Prostate gland (tissue), 2 donors: ENCODE measurements at regions of chr10 and their contacts with region 1.

Region 1: GRCh38 chr10:88245974-88246511 is 337.1 kb downstream of the RNLS start:
- DNase-seq: no peak
- H3K4me3 ChIP-seq: no peak overlapping the region
- H3K27ac ChIP-seq: no peak overlapping the region
- H3K4me1 ChIP-seq: no peaks in the 10 kb centered on the region
- H3K27me3 ChIP-seq: no peaks in the 10 kb centered on the region
- CTCF ChIP-seq: no peak
- POLR2A ChIP-seq: no peak

Region 2: DNA sequence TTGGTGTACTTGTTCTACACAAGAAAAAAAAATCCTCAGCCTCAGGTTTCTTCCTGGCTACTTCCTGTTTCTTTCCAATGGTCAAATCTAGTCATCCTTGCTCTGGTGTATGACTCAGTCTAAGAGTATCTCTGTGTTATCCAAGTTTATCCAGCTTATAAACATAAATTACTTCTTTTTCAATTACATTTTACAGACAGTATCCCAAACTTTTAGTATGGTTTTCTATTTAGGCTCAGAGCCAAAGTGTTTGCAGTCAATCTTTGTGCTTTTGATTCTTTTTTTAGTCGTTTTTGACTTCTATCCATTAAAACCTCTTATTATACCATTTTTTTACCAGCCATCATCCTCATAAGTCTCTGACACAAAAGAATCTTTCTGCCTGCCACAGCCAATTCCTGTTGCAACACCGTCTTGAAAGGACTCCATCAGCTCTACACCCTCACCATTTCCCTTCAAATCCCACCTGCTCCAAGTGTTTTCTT is 88.0 kb before region 1 on chr10:
- intact Hi-C with region 1: loop called (anchors 5 kb)
- DNase-seq: no peak
- H3K4me3 ChIP-seq: no peak overlapping the region
- H3K27ac ChIP-seq: peak overlapping the region in 1 of 2 donors; percentile 66
- H3K4me1 ChIP-seq: no peaks in the 10 kb centered on the region
- H3K27me3 ChIP-seq: no peaks in the 10 kb centered on the region
- CTCF ChIP-seq: no peak
- POLR2A ChIP-seq: no peak

Region 3: GRCh38 chr10:88332503-88333247 is 86.6 kb after region 1 on chr10:
- intact Hi-C with region 1: no loop called
- DNase-seq: no peak
- H3K4me3 ChIP-seq: no peak overlapping the region
- H3K27ac ChIP-seq: no peak overlapping the region
- H3K4me1 ChIP-seq: no peaks in the 10 kb centered on the region
- H3K27me3 ChIP-seq: no peaks in the 10 kb centered on the region
- CTCF ChIP-seq: no peak
- POLR2A ChIP-seq: no peak

Region 4: GRCh38 chr10:88372051-88372715 is 126.1 kb after region 1 on chr10:
- intact Hi-C with region 1: no loop called
- DNase-seq: no peak
- H3K4me3 ChIP-seq: no peak overlapping the region
- H3K27ac ChIP-seq: no peak overlapping the region
- H3K4me1 ChIP-seq: no peaks in the 10 kb centered on the region
- H3K27me3 ChIP-seq: no peaks in the 10 kb centered on the region
- CTCF ChIP-seq: no peak
- POLR2A ChIP-seq: no peak